Activated naive CD4-positive, alpha-beta T cell treated with anti-CD3 and anti-CD28 coated beads, Interleukin-2, amount 10 ng/mL, durations not matched to agents 7 days and 5 days (primary cell): ENCODE measurements at regions of chr1 and their contacts with region 1.

Region 1: DNA sequence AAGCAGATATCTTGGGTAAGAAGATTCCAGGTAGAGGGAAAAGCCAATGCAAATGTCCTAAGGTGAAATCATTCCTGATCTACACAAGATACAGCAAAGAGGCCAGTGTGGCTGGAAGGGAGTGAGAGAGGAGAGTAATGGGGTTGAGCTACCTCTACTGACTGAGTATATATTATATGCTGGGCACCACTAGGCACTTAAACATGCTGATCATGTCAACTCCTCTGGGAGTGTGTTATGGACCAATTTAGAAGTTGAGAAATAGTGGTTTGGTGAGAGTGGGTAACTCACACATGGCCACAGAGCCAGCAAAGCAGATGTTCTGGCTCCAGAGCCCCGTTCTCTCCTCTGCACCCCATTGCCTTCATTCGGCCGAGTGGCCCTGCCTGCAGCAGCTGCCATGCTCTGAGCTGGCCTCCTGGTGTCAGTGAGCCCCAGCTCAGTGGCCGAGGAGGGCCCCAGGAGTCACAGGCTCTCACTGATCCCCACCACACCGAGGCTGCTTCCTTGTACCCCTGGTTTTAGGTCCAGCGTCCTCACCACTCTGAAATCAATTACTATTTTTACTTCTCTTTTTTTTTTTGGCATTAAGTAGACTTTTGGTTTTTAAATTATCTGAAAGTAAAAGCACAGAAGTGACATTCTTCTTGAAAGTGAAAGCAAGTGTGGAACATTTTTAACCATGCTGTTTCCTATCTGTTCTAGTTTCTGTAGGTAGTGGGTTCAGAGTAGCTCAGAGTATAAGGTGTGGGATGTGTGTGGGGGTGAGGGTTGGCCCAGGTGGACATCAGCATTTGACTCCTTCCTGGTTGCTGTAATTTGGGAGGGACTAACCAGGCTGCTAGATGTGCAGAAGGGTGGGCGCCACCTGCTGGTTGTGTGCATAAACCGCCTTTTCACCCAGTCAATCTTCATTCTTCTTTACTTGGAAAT is 45.8 kb upstream of the CRNN start:
- DNase-seq: peak; percentile 81
- H3K4me3 Mint-ChIP-seq: peak overlapping the region; percentile 60
- H3K27ac Mint-ChIP-seq: peak overlapping the region; percentile 85
- H3K4me1 Mint-ChIP-seq: peaks cover 32% of the 10 kb centered on the region
- H3K27me3 Mint-ChIP-seq: peaks cover 10% of the 10 kb centered on the region

Region 2: GRCh38 chr1:152182431-152182830 is 277.4 kb before region 1 on chr1:
- CTCF ChIA-PET with region 1: interaction called, 129 read pairs
- DNase-seq: no peak
- H3K4me3 Mint-ChIP-seq: no peak overlapping the region
- H3K27ac Mint-ChIP-seq: no peak overlapping the region
- H3K4me1 Mint-ChIP-seq: no peaks in the 10 kb centered on the region
- H3K27me3 Mint-ChIP-seq: peaks cover 21% of the 10 kb centered on the region

Region 3: GRCh38 chr1:152347116-152347728 is 112.6 kb before region 1 on chr1:
- CTCF ChIA-PET with region 1: interaction called, 38 read pairs
- DNase-seq: peak; percentile 56
- H3K4me3 Mint-ChIP-seq: no peak overlapping the region
- H3K27ac Mint-ChIP-seq: no peak overlapping the region
- H3K4me1 Mint-ChIP-seq: no peaks in the 10 kb centered on the region
- H3K27me3 Mint-ChIP-seq: no peaks in the 10 kb centered on the region

Region 4: GRCh38 chr1:152440635-152441471 is 19.0 kb before region 1 on chr1:
- CTCF ChIA-PET with region 1: interaction called, 45 read pairs
- DNase-seq: peak; percentile 78
- H3K4me3 Mint-ChIP-seq: no peak overlapping the region
- H3K27ac Mint-ChIP-seq: no peak overlapping the region
- H3K4me1 Mint-ChIP-seq: no peaks in the 10 kb centered on the region
- H3K27me3 Mint-ChIP-seq: peaks cover 30% of the 10 kb centered on the region

Region 5: DNA sequence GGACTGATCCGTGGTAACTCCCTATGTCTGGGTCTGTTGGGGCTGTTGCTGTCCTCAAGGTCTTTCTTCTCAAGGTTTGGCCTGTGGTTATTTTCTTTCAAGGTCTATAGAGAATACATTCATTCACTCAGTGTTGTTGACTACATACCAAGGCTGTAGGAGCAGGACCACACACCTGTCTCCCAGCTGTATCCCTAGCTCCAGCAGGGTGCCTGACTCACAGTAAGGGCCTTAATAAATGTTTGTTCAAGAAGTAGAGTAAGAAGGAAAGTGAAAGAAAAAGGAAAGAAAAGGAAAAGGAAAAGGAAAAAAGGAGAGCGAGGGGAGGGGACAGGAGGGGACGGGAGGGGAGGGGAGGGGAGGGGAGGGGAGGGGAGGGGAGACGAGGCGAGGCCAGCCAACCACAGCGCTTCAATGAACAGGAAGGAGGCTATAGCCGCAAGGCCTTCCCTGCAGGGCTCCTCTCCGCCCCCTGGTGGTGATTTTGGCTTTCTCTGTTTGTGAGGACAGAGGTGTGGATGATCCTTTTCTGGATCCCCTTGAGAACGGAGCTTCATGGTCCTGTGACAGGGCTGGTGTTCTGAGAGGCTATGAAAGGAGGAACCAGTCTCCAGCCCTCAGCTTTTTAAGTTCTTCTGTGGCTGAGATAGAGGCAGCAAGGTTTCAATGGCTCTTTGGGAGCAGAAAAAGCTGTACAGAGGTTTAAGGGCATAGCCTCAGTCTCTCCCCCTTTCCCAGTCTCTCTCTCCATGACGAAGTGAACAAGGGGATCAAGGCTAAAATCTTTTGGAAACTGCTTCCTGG is 20.1 kb after region 1 on chr1:
- CTCF ChIA-PET with region 1: interaction called, 11 read pairs
- DNase-seq: peak; percentile 61
- H3K4me3 Mint-ChIP-seq: no peak overlapping the region
- H3K27ac Mint-ChIP-seq: no peak overlapping the region
- H3K4me1 Mint-ChIP-seq: peaks cover 8% of the 10 kb centered on the region
- H3K27me3 Mint-ChIP-seq: no peaks in the 10 kb centered on the region